GM18951 (cell line): ENCODE measurements at regions of chr7 and their contacts with region 1.

Region 1: GRCh38 chr7:98733036-98733435 is 116.0 kb downstream of the NPTX2 start:
- POLR2A ChIP-seq: no peak

Region 2: GRCh38 chr7:98434095-98434494 is 298.9 kb before region 1 on chr7:
- in situ Hi-C with region 1: loop called (anchors 10 kb)
- POLR2A ChIP-seq: no peak

Region 3: DNA sequence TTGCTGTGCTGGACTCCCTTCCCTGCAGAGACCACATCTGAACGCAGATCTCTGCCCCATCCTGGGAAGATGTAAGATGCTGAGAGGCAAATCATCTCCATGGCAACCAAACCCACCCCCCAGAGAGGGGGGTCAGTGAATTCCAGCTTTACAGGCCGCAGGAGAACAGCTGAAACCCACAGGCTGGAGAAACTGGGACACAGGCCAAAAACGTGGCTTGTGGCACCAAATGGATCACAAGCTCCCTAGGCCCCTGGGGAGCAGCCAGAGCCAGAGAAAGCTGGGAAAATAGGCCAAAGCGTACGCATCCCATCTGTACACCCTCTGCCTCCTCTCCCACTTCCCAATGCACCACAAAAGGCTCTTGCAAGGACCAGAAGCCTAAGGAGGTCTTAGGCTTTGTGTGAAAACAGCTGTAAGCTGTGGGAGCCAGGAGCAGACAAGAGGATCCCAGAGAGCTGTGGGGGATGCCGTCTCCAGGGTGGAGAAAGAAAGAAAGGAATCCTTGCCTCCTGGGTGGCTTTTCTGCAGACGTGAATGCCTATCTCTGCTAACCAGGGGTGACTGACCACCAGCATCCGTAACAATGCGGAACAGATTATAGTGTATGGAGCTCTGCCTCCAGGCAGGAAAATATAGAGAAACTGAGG is 77.2 kb after region 1 on chr7:
- in situ Hi-C with region 1: no loop called
- POLR2A ChIP-seq: no peak

Region 4: DNA sequence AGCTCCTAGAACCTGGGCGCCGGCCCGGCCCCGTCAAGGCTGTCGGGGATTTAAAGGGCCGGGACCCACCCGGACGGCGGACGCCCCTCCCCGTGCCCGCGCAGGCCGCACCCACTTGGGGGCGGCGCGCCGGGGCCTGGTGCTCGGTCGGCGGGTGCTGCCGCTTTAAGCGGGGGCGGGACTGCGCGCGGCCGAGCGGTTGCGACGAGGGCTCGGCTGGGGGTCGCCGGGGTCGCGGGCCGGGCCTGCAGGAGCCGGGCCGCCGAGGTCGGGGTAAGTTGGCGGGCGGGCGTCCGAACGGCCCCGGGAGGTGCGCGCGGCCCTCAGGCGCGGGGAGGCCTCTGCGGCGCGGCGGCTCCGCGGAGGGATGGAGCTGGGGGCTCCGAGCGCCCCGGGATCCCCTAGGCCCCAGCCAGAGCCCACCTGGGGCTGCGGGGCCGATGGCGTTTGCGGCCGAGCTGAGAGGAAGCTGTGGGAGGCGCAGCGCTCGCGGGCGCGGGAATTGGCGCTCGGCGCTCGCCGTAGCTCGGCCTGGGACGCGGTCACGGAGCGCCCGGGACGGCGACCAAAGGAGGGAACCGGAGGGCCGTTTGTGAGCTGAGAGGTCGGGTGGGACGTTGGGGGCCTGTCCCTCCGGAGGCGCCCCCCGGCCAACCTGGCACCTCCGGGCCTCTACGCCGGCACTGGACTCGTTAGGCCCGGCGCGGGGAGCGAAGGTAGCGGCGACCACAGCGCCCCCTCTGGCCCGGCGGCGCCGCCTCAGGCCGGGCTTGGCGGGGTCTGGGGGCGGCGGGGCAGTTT is 145.5 kb after region 1 on chr7 and contains the start of gene TRRAP:
- in situ Hi-C with region 1: no loop called
- POLR2A ChIP-seq: peak; percentile 55

Region 5: DNA sequence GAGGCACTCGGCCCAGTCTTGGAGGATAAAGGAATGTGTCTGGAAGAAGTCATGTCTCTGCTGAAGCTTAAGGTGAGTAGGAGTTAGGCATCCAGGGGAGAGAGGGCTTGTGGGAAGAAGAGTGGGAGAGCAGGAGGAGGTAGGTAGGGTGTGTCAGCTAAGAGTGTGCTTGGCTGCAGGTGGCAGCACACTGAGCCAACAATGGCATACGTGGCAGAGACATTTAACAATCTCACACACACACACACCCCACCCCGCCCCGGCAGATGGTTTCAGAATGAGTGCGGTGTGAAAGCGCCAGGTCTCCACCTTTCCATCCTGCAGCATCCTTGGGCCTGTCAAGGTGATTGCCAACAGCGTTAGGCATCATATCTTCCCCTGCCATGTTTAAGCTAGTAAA is 581.5 kb after region 1 on chr7:
- in situ Hi-C with region 1: no loop called
- POLR2A ChIP-seq: no peak